MCF 10A (cell line): ENCODE measurements at regions of chrX and their contacts with region 1.

Region 1: DNA sequence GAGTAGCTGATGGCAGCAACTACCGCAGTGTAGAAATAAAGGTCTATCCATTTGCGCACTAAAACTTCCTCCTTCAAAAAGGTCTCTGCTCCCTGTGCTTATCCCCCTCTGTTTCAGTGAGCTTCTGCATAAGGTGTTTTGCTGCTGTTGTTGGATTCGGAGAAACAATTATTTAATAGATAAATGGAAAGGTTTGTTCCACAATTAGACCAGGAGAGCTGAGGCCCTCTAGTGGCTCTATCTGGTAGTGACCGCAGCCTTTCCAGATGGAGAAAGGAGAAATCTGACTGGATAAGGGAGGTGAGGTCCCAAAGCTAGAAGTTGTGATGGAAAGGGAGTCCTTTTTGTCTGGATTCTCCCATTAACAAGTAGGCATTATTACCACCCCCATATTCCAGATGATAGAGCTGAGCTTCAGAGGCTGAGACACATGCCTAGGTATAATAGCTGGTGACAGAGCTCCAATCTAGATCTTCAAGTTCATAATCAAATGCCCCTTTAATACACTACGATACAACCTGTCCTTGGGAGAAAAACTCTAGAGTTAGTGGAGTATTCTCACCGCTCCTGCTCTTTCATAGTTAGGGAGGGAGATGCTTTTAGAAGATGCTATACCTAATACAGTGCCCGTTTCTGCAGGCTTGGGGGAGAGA is 5.1 kb upstream of the GABRQ start:
- DNase-seq: peak; percentile 69
- H3K4me3 Mint-ChIP-seq: no peak overlapping the region
- H3K27ac Mint-ChIP-seq: no peak overlapping the region
- H3K4me1 Mint-ChIP-seq: no peaks in the 10 kb centered on the region
- H3K27me3 Mint-ChIP-seq: no peaks in the 10 kb centered on the region
- CTCF ChIP-seq: peak; percentile 56

Region 2: DNA sequence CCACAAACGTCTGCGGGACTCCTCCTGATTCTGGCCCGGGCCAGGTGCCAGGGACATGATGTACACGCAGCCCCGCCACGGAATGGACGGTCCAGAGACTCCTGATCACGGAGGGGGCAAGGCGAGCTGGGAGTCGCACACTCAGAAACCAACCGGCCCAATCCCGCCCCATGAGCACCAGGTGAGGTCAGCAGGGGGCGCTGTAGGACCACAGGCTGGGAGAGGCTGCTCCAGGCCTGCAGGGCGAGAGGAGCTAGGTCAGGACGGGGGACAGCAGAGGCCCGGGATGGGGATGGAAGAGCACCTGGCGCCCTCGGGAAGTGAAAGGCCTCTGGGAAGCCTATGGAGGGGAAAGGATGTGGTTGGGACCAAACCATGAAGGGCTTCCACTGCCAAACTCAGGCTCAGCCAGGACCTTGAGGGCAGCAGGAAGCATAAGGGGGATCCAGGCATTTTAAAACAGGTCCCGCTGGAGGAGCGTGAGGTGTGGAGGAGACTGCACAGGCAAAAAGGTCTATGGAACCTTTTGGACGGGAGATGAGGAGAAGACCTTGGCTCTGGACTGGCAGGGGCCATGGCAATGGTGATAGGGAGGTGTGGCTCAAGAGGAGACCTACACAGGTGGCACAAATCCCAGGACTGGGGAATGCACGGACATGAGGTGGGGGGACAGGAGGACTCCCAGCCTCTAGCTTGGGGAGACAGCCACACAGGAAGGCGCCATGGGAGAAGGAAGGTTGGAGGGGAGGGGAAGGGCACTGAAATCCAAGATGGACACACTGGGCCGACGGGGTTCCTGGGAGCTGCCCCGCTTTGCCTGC is 1860.2 kb before region 1 on chrX:
- CTCF ChIA-PET with region 1: no interaction called
- POLR2A ChIA-PET with region 1: no interaction called
- intact Hi-C with region 1: loop called (anchors 5 kb)
- DNase-seq: peak; percentile 81
- H3K4me3 Mint-ChIP-seq: no peak overlapping the region
- H3K27ac Mint-ChIP-seq: peak overlapping the region; percentile 20
- H3K4me1 Mint-ChIP-seq: peaks cover 7% of the 10 kb centered on the region
- H3K27me3 Mint-ChIP-seq: no peaks in the 10 kb centered on the region
- CTCF ChIP-seq: peak; percentile 87

Region 3: GRCh38 chrX:151563449-151563848 is 1069.1 kb before region 1 on chrX and contains the start of gene PASD1:
- CTCF ChIA-PET with region 1: no interaction called
- POLR2A ChIA-PET with region 1: no interaction called
- intact Hi-C with region 1: no loop called
- DNase-seq: no peak
- H3K4me3 Mint-ChIP-seq: no peak within 1 kb of the TSS
- H3K27ac Mint-ChIP-seq: no peak within 1 kb of the TSS
- H3K4me1 Mint-ChIP-seq: no peaks in the 10 kb centered on the region
- H3K27me3 Mint-ChIP-seq: peaks cover 28% of the 10 kb centered on the region
- CTCF ChIP-seq: no peak
- total RNA-seq, gene PASD1: not detected in 2 replicates

Region 4: DNA sequence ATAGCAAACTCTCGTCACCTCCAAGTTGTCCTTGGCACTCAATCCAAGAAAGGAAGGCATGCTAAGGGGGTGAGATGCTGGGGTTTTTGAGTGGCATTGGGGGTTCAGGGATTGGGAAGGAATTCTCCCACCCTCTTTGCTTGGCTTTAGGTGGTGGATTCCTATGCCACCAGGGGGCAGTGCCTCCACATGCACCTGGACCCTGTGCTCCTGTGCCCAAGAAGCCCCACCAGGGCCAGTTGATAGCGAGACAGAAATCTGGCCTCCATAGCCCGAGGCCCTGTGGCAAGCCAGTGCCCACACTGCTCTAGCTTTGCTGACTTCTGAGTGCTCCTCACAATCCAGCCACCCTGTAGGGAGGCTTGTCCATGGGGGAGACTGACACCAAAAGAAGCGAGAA is 918.7 kb before region 1 on chrX:
- CTCF ChIA-PET with region 1: interaction called, 6 read pairs
- POLR2A ChIA-PET with region 1: no interaction called
- intact Hi-C with region 1: loop called (anchors 2 kb)
- DNase-seq: peak; percentile 47
- H3K4me3 Mint-ChIP-seq: no peak overlapping the region
- H3K27ac Mint-ChIP-seq: no peak overlapping the region
- H3K4me1 Mint-ChIP-seq: no peaks in the 10 kb centered on the region
- H3K27me3 Mint-ChIP-seq: peaks cover 15% of the 10 kb centered on the region
- CTCF ChIP-seq: peak; percentile 33

Region 5: DNA sequence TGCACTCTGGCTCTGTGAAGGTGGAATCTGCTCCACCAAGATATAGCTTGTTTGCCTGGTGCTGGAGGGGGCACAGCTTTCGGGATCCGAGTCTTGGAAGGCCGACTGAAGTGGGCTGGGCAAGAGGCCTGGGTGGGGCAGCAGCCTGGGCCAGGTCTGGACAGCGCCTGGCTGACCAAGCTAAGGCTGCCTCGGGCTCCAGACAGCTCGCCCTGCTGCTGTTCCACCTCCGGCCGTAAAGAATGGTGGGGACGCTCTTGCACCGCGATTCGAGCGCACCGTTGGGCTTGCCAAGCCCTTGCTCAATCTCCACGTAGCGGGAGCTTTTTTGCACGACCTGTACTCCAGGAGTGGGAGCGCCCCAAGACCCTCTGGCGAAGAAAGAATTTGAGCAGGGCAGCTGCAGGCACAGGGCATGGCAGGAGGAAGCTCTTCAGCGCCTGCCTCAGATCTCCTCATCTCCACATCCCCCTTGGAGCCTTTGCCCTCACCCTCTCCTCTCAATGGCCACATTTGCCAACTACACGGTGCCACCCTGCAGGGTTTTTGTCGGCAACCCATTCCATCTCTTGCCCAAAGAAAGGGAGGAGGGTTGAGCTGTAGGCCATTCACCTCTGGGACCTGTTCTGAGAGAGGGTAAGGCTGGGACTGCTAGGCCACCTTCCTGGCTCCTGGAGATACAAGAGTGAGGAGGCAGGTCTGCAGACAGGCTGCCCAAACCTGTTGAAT is 879.1 kb before region 1 on chrX:
- CTCF ChIA-PET with region 1: interaction called, 126 read pairs
- POLR2A ChIA-PET with region 1: interaction called, 6 read pairs
- intact Hi-C with region 1: loop called (anchors 1 kb)
- DNase-seq: peak; percentile 73
- H3K4me3 Mint-ChIP-seq: peak overlapping the region; percentile 36
- H3K27ac Mint-ChIP-seq: peak overlapping the region; percentile 11
- H3K4me1 Mint-ChIP-seq: peaks cover 12% of the 10 kb centered on the region
- H3K27me3 Mint-ChIP-seq: no peaks in the 10 kb centered on the region
- CTCF ChIP-seq: peak; percentile 78

Region 6: DNA sequence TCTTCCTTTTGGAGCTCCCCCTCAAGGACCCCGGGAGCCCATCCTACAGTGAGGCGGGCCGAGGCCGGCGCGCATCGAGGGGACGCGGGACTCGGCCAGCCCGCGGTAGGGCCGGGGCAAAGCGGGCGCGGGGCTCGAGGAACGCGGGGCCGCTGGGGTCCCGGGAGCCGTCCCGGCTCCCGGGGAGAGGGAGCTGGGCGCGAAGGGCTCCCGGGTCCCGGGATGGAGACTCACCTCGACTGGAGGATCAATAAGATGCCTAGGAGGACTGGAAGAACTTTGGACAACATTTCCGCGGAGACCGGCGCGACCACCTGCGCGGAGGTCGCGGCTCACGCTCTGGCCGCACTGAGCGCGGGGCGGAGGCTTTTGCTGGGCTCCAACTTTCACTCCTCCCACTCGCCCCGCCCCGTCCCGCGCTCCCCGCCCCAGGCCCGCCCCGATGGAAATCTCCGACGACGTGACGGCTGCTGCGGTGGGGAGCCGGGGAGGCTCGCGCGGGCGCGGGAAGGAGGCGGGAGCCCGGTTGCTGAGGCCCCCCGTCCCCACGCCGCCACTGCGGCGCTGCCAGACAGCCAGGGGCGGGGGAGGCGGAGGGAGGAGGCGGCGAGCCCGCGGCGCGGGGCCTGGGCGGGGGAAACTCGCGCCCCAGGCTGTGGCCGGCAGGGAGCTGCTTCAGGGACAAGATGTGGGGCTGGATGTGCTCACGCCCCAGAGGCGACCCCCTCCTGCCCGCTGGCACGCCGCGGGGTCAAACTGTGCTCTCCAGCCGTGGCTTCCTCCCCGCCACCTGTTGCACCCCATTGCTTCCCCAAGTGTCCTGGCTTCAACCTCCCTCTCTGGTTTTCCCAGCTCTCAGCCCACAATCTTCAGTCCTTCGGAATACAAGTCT is 658.0 kb before region 1 on chrX and contains the start of gene GABRE:
- CTCF ChIA-PET with region 1: interaction called, 3 read pairs
- POLR2A ChIA-PET with region 1: interaction called, 5 read pairs
- intact Hi-C with region 1: loop called (anchors 5 kb)
- DNase-seq: peak; percentile 44
- H3K4me3 Mint-ChIP-seq: peak within 1 kb of the TSS; percentile 79
- H3K27ac Mint-ChIP-seq: peak within 1 kb of the TSS; percentile 73
- H3K4me1 Mint-ChIP-seq: peaks cover 35% of the 10 kb centered on the region
- H3K27me3 Mint-ChIP-seq: no peaks in the 10 kb centered on the region
- CTCF ChIP-seq: no peak
- total RNA-seq, gene GABRE: 12.9 and 19.3 TPM in 2 replicates

Region 7: DNA sequence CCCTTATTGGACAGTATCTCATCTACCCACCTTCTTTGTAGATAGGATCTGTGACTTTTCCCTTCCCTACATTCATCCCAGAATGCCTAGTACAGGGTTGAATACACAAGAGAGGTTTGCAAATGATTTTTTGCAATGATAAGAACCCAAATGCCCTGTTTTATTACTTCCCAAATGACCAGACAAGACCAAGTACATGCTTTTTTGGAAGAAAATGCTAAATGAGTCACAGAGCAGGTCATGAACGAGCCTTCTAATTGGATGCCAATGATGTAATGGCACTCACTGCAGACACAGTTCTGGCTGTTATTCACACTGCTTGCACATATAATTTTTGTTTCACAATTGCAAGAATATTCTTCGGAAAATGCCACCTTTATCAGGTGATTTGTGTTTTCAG is 12.7 kb before region 1 on chrX:
- CTCF ChIA-PET with region 1: interaction called, 20 read pairs
- POLR2A ChIA-PET with region 1: interaction called, 3 read pairs
- intact Hi-C with region 1: no loop called
- DNase-seq: peak; percentile 30
- H3K4me3 Mint-ChIP-seq: no peak overlapping the region
- H3K27ac Mint-ChIP-seq: no peak overlapping the region
- H3K4me1 Mint-ChIP-seq: no peaks in the 10 kb centered on the region
- H3K27me3 Mint-ChIP-seq: no peaks in the 10 kb centered on the region
- CTCF ChIP-seq: no peak

Region 8: DNA sequence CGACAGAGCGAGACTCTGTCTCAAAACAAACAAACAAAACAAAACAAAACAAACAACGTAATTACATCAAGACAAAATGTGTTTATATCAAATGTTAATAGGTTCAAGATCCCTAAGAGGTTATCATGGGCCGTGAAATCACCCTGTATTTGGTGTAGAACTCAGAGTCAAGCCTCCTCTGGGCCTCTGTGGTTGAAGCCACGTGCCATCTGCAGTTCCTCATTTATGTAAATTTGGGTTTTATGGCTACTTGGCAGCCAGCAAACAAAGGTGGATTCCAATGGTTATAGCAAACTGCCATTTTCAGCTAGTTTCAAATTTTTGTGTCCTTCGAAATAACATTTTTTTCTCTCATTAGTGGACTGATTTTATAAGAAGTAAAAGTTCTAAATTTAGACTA is 214.7 kb after region 1 on chrX:
- CTCF ChIA-PET with region 1: no interaction called
- POLR2A ChIA-PET with region 1: no interaction called
- intact Hi-C with region 1: no loop called
- DNase-seq: no peak
- H3K4me3 Mint-ChIP-seq: no peak overlapping the region
- H3K27ac Mint-ChIP-seq: no peak overlapping the region
- H3K4me1 Mint-ChIP-seq: no peaks in the 10 kb centered on the region
- H3K27me3 Mint-ChIP-seq: no peaks in the 10 kb centered on the region
- CTCF ChIP-seq: no peak

Region 9: DNA sequence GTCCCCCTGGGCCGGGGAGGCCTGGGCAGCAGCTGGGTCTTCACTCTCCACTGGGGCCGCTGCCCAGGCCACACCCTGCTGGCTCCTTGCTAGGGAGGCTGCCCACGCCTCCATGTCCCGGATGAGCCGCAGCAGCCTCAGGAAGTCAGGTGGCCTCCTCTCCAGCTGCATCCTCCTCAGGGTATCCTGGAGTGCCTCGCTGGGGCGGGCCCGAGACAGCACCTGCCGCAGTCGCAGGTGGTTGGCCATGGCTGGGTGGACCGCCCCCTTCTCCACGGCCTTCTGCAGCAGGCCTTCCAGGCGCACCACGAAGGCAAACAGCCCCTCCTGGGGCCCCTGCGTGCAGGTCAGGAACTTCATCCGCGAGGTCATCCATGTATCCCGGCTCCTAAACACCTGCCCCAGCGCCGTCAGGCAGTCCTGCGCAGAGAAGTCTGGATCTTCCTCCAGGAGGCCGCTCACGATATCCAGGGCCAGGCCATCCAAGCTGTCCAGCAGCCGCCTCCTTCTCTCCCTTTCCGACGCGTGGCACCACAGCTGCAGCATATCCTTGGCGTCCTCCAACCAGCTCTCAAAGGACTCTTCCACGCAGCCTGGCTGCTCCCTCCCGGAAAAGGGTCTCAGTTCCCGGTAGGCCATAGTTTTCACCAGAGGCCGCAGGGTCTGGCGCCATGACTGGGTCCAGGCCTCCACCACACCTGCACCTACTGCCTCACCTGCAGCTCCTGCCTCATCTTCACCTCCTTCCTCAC is 686.9 kb after region 1 on chrX:
- CTCF ChIA-PET with region 1: no interaction called
- POLR2A ChIA-PET with region 1: no interaction called
- intact Hi-C with region 1: no loop called
- DNase-seq: no peak
- H3K4me3 Mint-ChIP-seq: no peak overlapping the region
- H3K27ac Mint-ChIP-seq: no peak overlapping the region
- H3K4me1 Mint-ChIP-seq: no peaks in the 10 kb centered on the region
- H3K27me3 Mint-ChIP-seq: peaks cover 17% of the 10 kb centered on the region
- CTCF ChIP-seq: no peak